Sigmoid colon (tissue), 7 donors: ENCODE measurements at regions of chr2 and their contacts with region 1.

Region 1: GRCh38 chr2:55050133-55050994 is at the start of gene RTN4:
- DNase-seq: peak; percentile 100
- H3K4me3 ChIP-seq: peak within 1 kb of the TSS; percentile 82 to 96 (median 96)
- H3K27ac ChIP-seq: peak within 1 kb of the TSS; percentile 99 to 100 (median 99)
- H3K4me1 ChIP-seq: peaks cover 0 to 38% (median 33%) of the 10 kb centered on the region in 4 donors
- H3K27me3 ChIP-seq: no peaks in the 10 kb centered on the region
- CTCF ChIP-seq: peak in 1 of 4 experiments; percentile 4
- EP300 ChIP-seq: peak in 1 of 4 donors; percentile 17
- POLR2A ChIP-seq: peak; percentile 97 to 98
- total RNA-seq, gene RTN4: 152 to 264 (median 199) TPM

Region 2: DNA sequence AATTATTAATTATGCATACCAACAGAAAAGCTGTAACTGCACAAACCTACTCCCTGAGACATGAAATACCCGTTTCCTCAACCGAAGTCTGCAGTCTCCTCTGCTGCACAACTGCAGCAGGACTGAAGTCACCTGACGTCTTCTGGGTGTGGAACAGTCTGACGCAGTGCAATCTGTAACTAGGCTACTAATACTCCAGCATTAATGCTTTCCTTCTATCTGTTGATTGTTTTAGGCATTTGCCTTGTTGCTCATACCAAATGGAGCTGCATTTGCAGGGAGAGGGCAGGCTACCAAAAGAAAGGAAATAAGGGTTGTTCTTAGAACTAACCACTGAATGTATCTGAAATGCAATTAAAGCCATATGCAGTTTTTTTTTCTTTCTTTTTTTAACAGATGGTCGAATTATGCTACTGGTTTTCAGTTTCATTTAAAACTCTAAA is 40.2 kb before region 1 on chr2:
- intact Hi-C with region 1: loop called (anchors 5 kb)
- DNase-seq: peak; percentile 73
- H3K4me3 ChIP-seq: peak overlapping the region in 3 of 4 donors; percentile 26 to 40 (median 40)
- H3K27ac ChIP-seq: peak overlapping the region; percentile 39 to 74 (median 62)
- H3K4me1 ChIP-seq: peaks cover 0 to 95% (median 87%) of the 10 kb centered on the region in 4 donors
- H3K27me3 ChIP-seq: no peaks in the 10 kb centered on the region
- CTCF ChIP-seq: no peak
- EP300 ChIP-seq: no peak
- POLR2A ChIP-seq: peak in 1 of 2 donors; percentile 69

Region 3: DNA sequence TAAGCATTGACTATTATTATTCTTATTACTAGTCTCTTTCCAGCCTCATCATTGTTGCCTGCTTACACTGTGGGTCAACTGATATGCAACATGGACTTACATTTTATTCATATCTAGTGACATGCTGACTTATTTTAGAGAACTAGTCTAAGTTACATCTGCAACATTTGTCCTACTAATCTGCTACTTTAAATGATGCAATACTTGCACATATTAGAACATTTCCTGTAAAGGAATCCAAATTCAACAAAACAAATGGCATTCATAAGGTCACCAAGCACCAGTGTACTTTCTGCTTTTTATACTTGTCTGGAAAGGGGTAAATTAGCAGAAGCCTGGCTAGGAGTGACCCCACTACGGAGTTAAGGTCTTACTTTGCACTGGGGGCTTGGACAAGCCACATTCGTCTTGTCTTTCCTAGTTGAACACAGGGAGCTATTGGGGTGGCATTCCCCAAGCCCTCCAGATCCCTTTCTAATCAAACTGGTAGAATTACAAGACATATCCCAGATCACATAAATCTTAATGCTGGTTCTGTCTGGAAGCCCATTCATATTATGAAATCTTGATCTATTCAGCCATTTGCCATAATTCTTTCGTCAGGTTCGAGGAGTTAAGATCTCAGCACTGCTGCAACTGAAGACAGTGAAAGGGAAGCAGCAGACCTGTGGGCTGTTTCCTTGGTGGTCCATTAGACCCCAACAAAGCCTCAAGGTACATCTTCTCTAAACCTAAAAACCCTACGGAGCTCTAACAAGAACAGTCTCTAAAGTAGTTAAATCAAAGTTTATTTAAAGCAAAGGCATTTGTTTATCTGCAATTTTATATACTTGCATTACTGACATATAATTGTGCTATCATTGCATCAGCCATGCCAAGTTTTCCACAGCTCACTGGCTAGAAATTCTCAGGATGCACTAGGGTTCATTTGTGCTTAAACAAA is 49.8 kb after region 1 on chr2:
- intact Hi-C with region 1: loop called (anchors 5 kb)
- DNase-seq: no peak
- H3K4me3 ChIP-seq: no peak overlapping the region
- H3K27ac ChIP-seq: peak overlapping the region; percentile 65 to 87 (median 84)
- H3K4me1 ChIP-seq: peaks cover 0 to 69% (median 59%) of the 10 kb centered on the region in 4 donors
- H3K27me3 ChIP-seq: no peaks in the 10 kb centered on the region
- CTCF ChIP-seq: no peak
- EP300 ChIP-seq: peak in 1 of 4 donors; percentile 63
- POLR2A ChIP-seq: no peak

Region 4: DNA sequence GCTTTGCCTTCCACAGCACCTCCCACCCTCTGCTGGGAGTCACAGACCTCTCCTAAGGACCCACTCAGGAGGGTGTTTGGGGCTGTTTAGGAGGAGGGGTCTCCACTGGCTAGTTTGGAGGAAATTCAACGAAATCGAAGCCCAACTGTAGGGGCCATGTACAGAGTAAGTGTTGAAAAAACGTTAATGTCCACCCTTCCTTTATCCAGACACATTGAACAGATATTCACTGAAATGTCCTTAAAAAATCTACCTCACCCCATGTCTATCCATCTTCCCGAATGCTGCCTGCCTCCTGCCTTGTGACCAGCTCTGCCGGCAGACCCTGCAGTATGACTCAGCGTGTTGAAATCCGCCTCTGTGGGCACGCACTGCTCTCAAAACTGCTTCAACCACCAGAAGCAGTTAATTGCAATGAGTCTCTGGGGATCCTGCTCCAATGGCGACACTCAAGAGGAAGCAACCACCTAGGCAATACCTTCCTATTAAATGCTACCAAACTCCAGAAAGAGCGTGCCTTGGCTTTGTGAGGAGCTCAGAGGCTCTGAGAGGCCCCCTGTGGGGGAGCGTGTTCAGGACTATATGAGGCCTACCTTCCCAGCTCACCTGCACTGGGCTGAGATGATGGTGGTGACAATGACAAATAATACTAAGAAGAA is 61.3 kb after region 1 on chr2:
- intact Hi-C with region 1: loop called (anchors 5 kb)
- DNase-seq: peak; percentile 92
- H3K4me3 ChIP-seq: no peak overlapping the region
- H3K27ac ChIP-seq: peak overlapping the region; percentile 77 to 89 (median 88)
- H3K4me1 ChIP-seq: peaks cover 0 to 74% (median 56%) of the 10 kb centered on the region in 4 donors
- H3K27me3 ChIP-seq: no peaks in the 10 kb centered on the region
- CTCF ChIP-seq: no peak
- EP300 ChIP-seq: peak in 1 of 4 donors; percentile 31
- POLR2A ChIP-seq: no peak

Region 5: GRCh38 chr2:55168221-55169154 is 118.1 kb after region 1 on chr2:
- intact Hi-C with region 1: loop called (anchors 2 kb)
- DNase-seq: peak; percentile 85
- H3K4me3 ChIP-seq: no peak overlapping the region
- H3K27ac ChIP-seq: peak overlapping the region; percentile 58 to 77 (median 73)
- H3K4me1 ChIP-seq: peaks cover 0 to 55% (median 23%) of the 10 kb centered on the region in 4 donors
- H3K27me3 ChIP-seq: no peaks in the 10 kb centered on the region
- CTCF ChIP-seq: peak; percentile 66 to 81 (median 74)
- EP300 ChIP-seq: no peak
- POLR2A ChIP-seq: no peak

Region 6: DNA sequence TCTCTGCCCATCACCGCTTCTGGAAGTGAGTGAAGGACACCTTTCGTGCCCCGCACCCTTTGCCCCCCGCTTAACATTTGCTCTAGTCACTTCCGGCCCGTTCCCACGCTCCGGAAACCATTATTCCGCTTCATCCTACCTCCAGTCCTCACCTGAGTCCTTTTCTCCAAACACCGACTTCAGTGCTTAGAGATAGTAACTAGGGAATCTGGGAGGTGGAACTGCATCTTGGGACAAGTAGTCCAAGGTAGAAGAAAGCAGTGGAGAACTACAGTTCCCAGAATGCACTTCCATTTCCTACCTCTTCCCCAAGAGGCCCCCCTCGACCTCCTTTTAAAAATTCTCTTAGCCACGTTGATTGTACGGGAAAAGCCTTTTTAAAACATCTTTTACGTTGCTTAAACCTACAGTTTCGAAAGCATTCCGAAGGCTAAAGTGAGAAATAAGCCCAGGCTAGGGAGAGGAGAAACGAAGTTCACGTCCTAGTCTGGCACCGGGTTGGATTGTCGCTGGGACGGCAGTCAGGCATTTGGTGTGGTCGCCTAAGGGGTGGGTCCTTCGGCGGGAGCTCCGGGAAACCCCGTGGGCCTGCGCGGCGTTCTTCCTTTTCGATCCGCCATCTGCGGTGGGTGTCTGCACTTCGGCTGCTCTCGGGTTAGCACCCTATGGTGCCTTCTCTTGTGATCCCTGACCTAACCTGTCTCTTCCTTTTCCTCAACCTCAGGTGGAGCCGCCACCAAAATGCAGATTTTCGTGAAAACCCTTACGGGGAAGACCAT is 181.9 kb after region 1 on chr2 and contains the starts of genes CLHC1 and RPS27A:
- intact Hi-C with region 1: loop called (anchors 5 kb)
- DNase-seq: peak; percentile 94
- H3K4me3 ChIP-seq: peak within 1 kb of the TSS; percentile 74 to 92 (median 88)
- H3K27ac ChIP-seq: peak within 1 kb of the TSS; percentile 92 to 95 (median 92)
- H3K4me1 ChIP-seq: peaks cover 0 to 34% (median 18%) of the 10 kb centered on the region in 4 donors
- H3K27me3 ChIP-seq: no peaks in the 10 kb centered on the region
- CTCF ChIP-seq: no peak
- EP300 ChIP-seq: no peak
- POLR2A ChIP-seq: peak; percentile 80 to 86
- total RNA-seq, gene CLHC1: 4.9 to 22.4 (median 11.4) TPM
- total RNA-seq, gene RPS27A: 1,474 to 3,968 (median 2,475) TPM